A673 (cell line): ENCODE measurements at regions of chr13 and their contacts with region 1.

Region 1: DNA sequence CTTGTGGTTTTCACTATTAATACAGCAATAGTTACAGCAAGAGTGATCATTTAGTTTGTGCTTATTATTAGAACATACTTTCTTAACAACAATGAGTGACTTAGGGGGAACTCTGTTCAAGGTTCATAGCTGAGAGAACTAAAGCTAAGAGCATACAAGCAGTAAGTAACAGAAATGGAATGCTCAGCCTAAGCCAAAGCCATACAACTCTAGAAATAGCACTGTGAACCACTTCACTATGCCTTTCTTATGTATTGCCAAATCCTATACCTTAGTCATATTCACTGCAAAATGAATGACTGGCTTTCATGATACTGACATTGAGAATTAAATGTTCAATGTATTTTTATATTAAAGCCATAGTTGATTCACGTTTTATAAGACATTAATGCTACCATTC is 599.7 kb upstream of the SLITRK1 start:
- DNase-seq: no peak
- H3K4me3 ChIP-seq: no peak overlapping the region
- H3K27ac ChIP-seq: no peak overlapping the region
- H3K4me1 ChIP-seq: no peaks in the 10 kb centered on the region
- H3K27me3 ChIP-seq: no peaks in the 10 kb centered on the region
- CTCF ChIP-seq: no peak

Region 2: DNA sequence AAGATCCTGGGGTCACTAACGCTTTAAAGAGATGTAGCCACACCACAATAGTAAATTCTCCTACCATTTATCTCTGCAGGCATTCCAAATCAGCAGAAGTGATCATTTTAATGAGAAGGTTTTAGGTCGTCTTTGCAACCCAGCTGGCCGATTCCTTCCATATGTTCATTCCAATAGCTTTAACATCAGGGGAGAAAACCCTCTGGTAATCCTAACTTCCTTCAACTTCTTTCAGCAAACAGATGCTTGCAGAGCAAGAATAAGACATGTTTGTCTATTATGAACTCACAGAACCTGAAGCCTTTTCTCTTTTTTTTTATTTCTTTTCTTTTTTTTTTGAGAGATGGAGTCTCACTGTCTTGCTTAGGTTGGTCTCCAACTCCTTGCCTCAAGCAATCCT is 101.1 kb before region 1 on chr13:
- CTCF ChIA-PET with region 1: no interaction called
- POLR2A ChIA-PET with region 1: interaction called, 16 read pairs
- intact Hi-C with region 1: no loop called
- DNase-seq: peak; percentile 7
- H3K4me3 ChIP-seq: no peak overlapping the region
- H3K27ac ChIP-seq: no peak overlapping the region
- H3K4me1 ChIP-seq: no peaks in the 10 kb centered on the region
- H3K27me3 ChIP-seq: no peaks in the 10 kb centered on the region
- CTCF ChIP-seq: no peak